HepG2 (cell line): ENCODE measurements at regions of chr6 and their contacts with region 1.

Region 1: GRCh38 chr6:47229255-47229654 is 80.5 kb downstream of the TNFRSF21 start:
- DNase-seq: no peak
- ATAC-seq: no peak
- H3K4me3 ChIP-seq: no peak overlapping the region
- H3K27ac ChIP-seq: no peak overlapping the region
- H3K4me1 ChIP-seq: peaks cover 18% of the 10 kb centered on the region
- H3K27me3 ChIP-seq: no peaks in the 10 kb centered on the region
- CTCF ChIP-seq: no peak
- EP300 ChIP-seq: no peak
- POLR2A ChIP-seq: no peak
- RAD21 ChIP-seq: no peak

Region 2: GRCh38 chr6:47146428-47147174 is 82.7 kb before region 1 on chr6:
- CTCF ChIA-PET with region 1: no interaction called
- POLR2A ChIA-PET with region 1: no interaction called
- in situ Hi-C with region 1: no loop called
- intact Hi-C with region 1: loop called (anchors 5 kb)
- DNase-seq: no peak
- ATAC-seq: peak; percentile 19
- H3K4me3 ChIP-seq: peak overlapping the region; percentile 2 to 36 (median 25); a peak in 4 of 6 replicates
- H3K27ac ChIP-seq: no peak overlapping the region
- H3K4me1 ChIP-seq: peaks cover 45% of the 10 kb centered on the region
- H3K27me3 ChIP-seq: no peaks in the 10 kb centered on the region
- CTCF ChIP-seq: no peak
- EP300 ChIP-seq: no peak
- POLR2A ChIP-seq: no peak
- RAD21 ChIP-seq: no peak